ENCODE measurements at regions of chr6 and their contacts with region 1.

Region 1: DNA sequence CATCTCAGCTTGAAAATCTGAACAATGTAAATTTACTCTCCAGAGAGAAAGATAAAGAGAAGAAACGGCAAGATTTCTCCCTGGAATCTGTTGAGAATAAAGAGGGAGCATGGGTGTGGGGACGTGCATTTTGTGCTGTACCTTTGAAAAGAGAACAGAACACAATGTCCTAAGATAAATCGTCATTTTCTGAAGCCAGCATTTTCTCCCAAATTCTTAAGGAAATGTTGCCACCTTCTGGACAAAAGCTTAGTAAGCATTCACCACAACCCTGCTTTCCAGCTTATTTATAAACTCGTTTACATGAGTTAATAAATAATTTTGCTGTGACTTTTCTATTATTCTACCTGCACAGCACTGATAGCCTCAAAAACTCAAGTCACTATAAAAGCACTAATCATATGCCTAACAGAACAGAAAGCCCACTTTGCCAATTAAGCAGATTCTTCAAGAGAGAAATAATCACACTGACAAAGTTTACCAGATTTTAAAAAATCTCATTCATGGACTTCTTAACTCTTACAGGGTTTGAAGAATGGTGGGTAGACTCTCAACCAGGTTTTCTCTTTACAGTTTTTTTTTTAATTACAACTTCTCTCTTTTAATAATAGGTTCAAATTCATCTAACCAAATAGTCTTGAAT is 155.8 kb downstream of the MBOAT1 start:
- DNase-seq: peak; percentile 44
- H3K4me3 ChIP-seq: no peak overlapping the region
- H3K27ac ChIP-seq: no peak overlapping the region
- H3K4me1 ChIP-seq: no peaks in the 10 kb centered on the region
- H3K27me3 ChIP-seq: no peaks in the 10 kb centered on the region
- CTCF ChIP-seq: peak; percentile 19 to 26
- POLR2A ChIP-seq: no peak

Region 2: DNA sequence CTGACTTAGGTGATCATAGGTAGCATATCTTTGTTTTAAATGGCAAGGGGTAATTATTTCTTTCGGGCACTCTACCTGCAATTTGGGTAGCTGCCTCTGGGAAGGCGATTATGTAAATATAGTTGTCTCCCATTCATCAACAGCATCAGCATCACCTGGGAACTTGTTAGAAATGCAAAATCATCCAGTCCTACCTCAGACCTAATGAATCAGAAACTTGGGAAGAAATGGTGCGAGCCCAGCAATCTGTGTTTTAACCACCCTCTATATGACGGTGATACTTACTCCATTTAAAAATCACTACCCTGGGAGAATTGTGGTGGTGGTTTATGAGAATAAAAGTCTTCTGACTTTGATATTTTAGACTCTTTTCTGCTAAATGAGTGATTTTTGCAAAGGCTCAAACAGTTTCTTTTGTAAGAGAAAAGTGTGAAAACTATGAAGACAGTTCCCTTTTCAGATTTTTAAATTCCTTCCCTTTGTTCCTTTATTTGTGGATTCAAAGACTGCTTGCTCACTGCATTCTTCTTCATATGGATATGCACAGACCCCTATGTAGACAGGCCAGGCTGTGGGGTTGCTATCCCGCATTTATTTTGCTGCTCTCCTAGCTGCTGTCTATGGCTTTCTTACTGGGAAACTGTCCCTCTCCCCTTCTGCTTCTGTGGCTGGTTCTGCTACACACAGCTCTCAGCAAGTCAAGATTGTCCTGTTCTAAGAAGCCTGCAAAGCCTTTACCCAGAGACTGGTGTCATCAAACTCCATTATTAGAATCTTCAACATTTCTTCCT is 1304.0 kb before region 1 on chr6:
- CTCF ChIA-PET with region 1: interaction called, 49 read pairs
- POLR2A ChIA-PET with region 1: no interaction called
- dilution Hi-C with region 1: no loop called
- intact Hi-C with region 1: no loop called
- DNase-seq: no peak
- H3K4me3 ChIP-seq: no peak overlapping the region
- H3K27ac ChIP-seq: no peak overlapping the region
- H3K4me1 ChIP-seq: no peaks in the 10 kb centered on the region
- H3K27me3 ChIP-seq: no peaks in the 10 kb centered on the region
- CTCF ChIP-seq: no peak
- POLR2A ChIP-seq: no peak